Heart right ventricle (tissue), 16 donors: ENCODE measurements at regions of chr14 and their contacts with region 1.

Region 1: DNA sequence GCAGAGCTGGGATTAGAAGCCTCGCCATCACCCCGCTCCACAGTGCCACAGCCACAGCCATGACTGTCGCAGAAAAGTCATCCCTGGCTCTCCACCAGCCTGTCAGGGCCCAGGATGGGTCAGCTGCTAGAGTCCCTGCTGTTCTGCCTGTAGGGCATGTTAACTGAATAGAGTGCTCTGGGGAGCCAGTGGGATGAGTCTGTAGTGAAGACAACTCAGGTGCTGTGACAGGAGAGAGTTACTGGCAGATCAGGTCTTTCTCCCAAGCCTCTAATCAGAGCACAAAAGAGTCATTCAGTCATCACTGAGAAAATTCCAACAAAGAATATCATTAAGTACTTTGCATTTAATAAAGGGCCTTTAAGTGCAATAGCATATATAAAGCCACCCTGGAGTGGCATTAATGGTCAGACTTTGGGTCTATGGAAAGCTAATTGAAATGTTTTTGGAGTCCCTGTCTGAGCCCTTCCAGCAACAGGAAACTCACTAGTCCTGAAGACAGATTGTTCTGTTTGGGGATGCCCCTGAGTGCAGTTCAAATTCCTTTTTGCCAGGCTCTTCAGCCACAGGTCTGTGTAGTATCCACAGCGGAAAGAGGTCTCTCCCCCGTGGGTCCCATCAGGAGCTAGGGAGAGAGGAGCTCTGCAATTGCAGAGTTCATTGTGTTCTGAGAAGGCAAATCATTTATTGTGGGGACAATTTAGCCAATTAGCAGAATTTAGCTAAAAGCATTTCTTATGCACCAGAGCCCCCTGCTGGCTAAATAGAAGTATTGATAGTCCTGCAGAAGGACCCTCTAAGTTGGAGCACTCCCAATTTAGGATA is 45.2 kb upstream of the C14orf132 start:
- DNase-seq: peak in 1 of 2 donors; percentile 16
- ATAC-seq: no peak
- H3K4me3 ChIP-seq: no peak overlapping the region
- H3K27ac ChIP-seq: no peak overlapping the region
- H3K4me1 ChIP-seq: no peaks in the 10 kb centered on the region
- H3K27me3 ChIP-seq: peaks cover 0 to 50% (median 36%) of the 10 kb centered on the region in 7 donors
- CTCF ChIP-seq: peak; percentile 58 to 84 (median 81)

Region 2: DNA sequence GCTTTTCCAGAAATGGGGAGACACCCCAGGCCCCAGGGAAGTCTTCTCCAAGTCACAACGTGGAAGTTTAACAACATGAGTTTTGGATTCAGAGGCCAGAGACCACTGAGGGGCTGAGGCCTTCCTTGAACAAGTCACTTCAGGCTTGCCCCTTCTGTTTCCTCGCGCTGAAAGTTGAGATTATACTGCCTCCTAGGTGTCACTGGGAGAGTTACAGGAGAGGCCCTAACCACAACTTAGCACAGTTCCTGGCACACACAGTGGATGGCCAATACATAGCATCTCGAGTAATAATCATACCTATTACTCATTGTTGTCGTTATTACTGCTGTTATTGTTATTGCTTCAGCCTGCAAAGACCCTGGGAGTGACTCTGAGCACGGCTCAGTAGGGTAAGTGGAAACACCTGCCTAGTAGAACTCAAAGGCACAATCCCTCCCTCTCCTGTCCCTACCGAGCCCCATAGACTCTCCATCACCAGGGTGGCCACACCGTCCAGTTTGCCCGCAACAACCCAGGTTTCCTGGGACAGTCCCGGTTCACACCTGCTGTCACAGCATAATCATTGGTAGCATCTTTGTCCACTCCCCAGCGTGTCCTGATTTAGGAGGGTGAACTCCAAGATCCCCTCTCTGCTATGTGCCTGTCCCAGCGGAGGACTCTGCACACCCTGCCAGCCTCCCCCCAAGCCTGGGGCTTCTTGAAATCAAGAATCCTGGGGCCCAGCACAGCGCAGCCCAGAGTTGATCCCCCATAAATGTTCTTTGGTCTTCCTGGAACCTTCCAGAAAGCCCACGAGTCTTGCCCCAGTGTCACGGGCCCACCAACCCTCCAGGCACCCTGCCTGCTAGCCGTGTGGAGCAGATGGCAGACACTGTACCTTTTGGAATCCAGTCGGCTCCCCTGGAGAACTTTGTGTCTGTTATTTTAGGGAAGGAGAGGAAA is 562.5 kb before region 1 on chr14:
- intact Hi-C with region 1: loop called in 3 of 10 experiments (anchors 10 kb)
- DNase-seq: no peak
- ATAC-seq: peak; percentile 47 to 84 (median 60)
- H3K4me3 ChIP-seq: no peak overlapping the region
- H3K27ac ChIP-seq: peak overlapping the region in 6 of 10 donors; percentile 8 to 58 (median 37)
- H3K4me1 ChIP-seq: peaks cover 0 to 14% (median 5%) of the 10 kb centered on the region in 9 donors
- H3K27me3 ChIP-seq: no peaks in the 10 kb centered on the region
- CTCF ChIP-seq: peak; percentile 28 to 68 (median 55)

Region 3: DNA sequence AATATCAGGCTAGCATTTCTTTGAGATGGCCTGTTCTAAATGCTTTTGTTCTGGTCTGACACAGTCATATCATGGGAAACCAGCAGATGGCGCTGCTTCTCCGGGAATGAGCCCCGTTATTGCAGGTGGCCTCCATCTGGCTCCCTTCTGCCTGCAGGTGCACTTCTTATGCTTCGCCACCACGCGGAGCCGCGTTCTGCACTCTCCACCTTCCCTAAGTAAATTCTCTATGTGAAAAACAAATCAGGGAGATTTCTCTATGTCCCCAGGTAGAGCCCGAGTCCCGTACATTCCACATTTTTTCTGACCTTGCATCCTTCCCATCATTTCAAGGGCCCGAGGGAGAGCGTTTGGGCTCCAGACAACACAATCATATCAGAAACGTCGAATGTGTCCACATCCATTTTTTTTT is 433.0 kb before region 1 on chr14:
- intact Hi-C with region 1: loop called (anchors 1 to 5 kb)
- DNase-seq: peak; percentile 75 to 79
- ATAC-seq: peak; percentile 85 to 90 (median 87)
- H3K4me3 ChIP-seq: no peak overlapping the region
- H3K27ac ChIP-seq: no peak overlapping the region
- H3K4me1 ChIP-seq: peaks cover 0 to 4% (median 0%) of the 10 kb centered on the region in 9 donors
- H3K27me3 ChIP-seq: peaks cover 0 to 6% (median 0%) of the 10 kb centered on the region in 7 donors
- CTCF ChIP-seq: peak; percentile 75 to 94 (median 93)

Region 4: GRCh38 chr14:95952945-95953724 is 40.8 kb before region 1 on chr14:
- intact Hi-C with region 1: no loop called
- DNase-seq: no peak
- ATAC-seq: no peak
- H3K4me3 ChIP-seq: no peak overlapping the region
- H3K27ac ChIP-seq: no peak overlapping the region
- H3K4me1 ChIP-seq: no peaks in the 10 kb centered on the region
- H3K27me3 ChIP-seq: peaks cover 0 to 35% (median 6%) of the 10 kb centered on the region in 7 donors
- CTCF ChIP-seq: no peak

Region 5: GRCh38 chr14:96053600-96054381 is 59.8 kb after region 1 on chr14:
- intact Hi-C with region 1: no loop called
- DNase-seq: peak in 1 of 2 donors; percentile 84
- ATAC-seq: peak in 7 of 8 donors; percentile 77 to 97 (median 96)
- H3K4me3 ChIP-seq: no peak overlapping the region
- H3K27ac ChIP-seq: peak overlapping the region in 8 of 10 donors; percentile 35 to 92 (median 79)
- H3K4me1 ChIP-seq: peaks cover 0 to 35% (median 6%) of the 10 kb centered on the region in 9 donors
- H3K27me3 ChIP-seq: peaks cover 0 to 5% (median 0%) of the 10 kb centered on the region in 7 donors
- CTCF ChIP-seq: no peak

Region 6: DNA sequence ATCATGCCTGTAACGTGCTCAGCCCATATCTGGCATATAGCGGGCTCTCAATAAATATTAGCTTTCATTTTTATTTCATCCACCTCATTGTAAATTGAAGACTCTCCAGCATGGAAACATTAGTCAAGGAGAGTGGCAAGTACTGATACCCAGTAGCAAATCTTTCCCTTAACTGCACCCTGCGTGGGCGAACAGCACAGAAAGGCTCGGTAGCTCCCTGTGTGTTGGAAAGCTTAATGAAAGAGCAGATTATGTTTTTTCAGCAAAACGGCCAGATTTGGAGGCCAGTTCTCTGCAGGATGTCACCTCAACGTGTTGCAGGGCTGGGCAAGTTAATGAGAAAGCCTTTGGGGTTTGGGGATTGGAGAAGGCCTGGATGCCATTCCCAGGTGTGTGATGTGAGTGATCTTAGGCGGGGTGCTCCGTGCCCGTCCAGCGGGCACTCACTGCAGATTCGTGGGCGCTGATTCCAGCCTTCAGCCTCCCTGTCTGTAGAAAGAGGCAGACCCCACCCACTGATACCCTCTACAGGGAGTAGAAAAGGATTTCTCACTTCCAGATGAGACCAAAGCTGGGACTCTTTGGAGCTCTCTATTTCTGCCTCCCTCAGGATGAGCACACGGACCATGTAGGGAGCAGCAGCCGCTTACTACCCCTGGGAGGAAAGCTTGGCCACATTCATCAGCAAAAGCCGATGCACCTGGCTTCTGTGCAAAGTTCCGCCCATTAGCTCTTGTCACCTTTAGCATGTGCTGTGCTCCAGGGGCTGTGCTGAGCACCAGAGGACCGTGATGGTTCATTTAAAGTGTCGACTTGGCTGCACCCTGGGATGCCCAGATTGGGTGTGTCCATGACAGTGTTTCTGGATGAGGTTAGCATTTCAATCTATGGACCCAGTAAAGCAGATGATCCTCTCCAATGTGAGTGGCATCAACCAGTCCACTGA is 74.3 kb after region 1 on chr14:
- intact Hi-C with region 1: no loop called
- DNase-seq: no peak
- ATAC-seq: no peak
- H3K4me3 ChIP-seq: no peak overlapping the region
- H3K27ac ChIP-seq: no peak overlapping the region
- H3K4me1 ChIP-seq: no peaks in the 10 kb centered on the region
- H3K27me3 ChIP-seq: peaks cover 0 to 5% (median 0%) of the 10 kb centered on the region in 7 donors
- CTCF ChIP-seq: no peak

Region 7: GRCh38 chr14:96100161-96101029 is 106.4 kb after region 1 on chr14:
- intact Hi-C with region 1: loop called in 4 of 10 experiments (anchors 2 to 10 kb)
- DNase-seq: peak; percentile 54 to 73
- ATAC-seq: peak in 5 of 8 donors; percentile 42 to 76 (median 67)
- H3K4me3 ChIP-seq: no peak overlapping the region
- H3K27ac ChIP-seq: no peak overlapping the region
- H3K4me1 ChIP-seq: peaks cover 0 to 3% (median 0%) of the 10 kb centered on the region in 9 donors
- H3K27me3 ChIP-seq: peaks cover 0 to 32% (median 26%) of the 10 kb centered on the region in 7 donors
- CTCF ChIP-seq: peak; percentile 46 to 91 (median 80)

Region 8: DNA sequence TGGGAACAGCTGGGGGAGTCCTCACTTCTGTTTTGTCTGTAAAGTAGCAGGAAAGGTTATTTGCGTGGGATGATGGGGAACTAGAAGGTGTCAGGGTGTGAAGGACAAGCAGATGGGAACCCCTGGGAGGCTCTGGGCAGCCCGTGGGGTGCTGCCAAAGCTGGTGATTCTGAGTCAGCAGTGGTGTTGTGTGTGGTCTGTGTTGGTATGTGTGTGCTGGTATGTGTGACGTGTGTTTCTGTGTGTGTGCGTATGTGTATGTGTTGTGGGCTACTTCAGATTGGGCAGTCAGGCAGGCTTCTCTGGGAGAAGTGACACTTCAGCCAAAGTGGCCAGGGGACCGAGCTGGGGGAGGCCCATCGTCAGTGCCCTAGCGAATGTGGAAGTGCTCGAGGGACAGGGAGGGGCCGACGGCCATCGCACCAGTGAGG is 195.3 kb after region 1 on chr14:
- intact Hi-C with region 1: no loop called
- DNase-seq: no peak
- ATAC-seq: no peak
- H3K4me3 ChIP-seq: no peak overlapping the region
- H3K27ac ChIP-seq: no peak overlapping the region
- H3K4me1 ChIP-seq: peaks cover 0 to 6% (median 0%) of the 10 kb centered on the region in 9 donors
- H3K27me3 ChIP-seq: peaks cover 0 to 42% (median 15%) of the 10 kb centered on the region in 7 donors
- CTCF ChIP-seq: no peak